ENCODE measurements at regions of chr7 and their contacts with region 1.

Region 1: GRCh38 chr7:135662373-135663114 is at the start of gene STMP1:
- DNase-seq: peak; percentile 82
- H3K4me3 ChIP-seq: peak within 1 kb of the TSS; percentile 95
- CTCF ChIP-seq: peak; percentile 89

Region 2: GRCh38 chr7:135281363-135281949 is 381.1 kb before region 1 on chr7:
- CTCF ChIA-PET with region 1: interaction called, 24 read pairs
- POLR2A ChIA-PET with region 1: no interaction called
- DNase-seq: peak; percentile 45
- H3K4me3 ChIP-seq: no peak overlapping the region
- CTCF ChIP-seq: peak; percentile 94

Region 3: DNA sequence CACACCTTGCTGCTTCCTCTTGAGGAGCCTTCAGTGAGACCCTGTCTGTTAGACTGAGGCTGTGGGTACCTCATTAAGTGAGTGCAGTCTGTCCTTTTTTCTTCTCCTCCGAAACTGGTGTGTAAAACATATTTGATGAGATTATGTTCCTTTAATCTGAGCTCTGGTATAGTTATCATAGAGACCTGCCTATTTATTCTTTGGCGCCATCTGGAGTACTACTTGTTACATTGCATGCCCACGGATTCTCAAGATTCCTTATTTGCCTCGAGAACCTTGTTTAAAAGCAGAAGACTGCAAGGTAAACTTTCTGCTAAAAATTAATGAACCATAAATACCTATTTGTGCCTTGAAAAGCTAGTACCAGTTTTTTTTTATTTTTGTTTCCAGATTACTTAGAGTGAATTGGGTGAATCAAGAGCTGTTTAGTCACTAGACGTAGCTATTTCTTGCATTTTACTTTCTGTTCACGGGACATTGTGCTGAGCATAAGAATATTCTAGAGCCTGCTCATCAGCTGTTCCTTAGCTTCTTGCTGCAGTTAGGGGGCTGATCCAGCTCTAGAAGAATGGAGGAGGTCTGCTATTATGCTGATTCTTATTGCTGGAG is 17.1 kb before region 1 on chr7:
- CTCF ChIA-PET with region 1: interaction called, 139 read pairs
- POLR2A ChIA-PET with region 1: no interaction called
- DNase-seq: no peak
- H3K4me3 ChIP-seq: no peak overlapping the region
- CTCF ChIP-seq: peak; percentile 52

Region 4: GRCh38 chr7:135684136-135684535 is 21.6 kb after region 1 on chr7:
- CTCF ChIA-PET with region 1: interaction called, 13 read pairs
- POLR2A ChIA-PET with region 1: interaction called, 3 read pairs
- DNase-seq: no peak
- H3K4me3 ChIP-seq: no peak overlapping the region
- CTCF ChIP-seq: no peak

Region 5: GRCh38 chr7:135795846-135796570 is 133.5 kb after region 1 on chr7:
- CTCF ChIA-PET with region 1: interaction called, 199 read pairs
- POLR2A ChIA-PET with region 1: no interaction called
- DNase-seq: no peak
- H3K4me3 ChIP-seq: no peak overlapping the region
- CTCF ChIP-seq: no peak

Region 6: GRCh38 chr7:135911099-135911498 is 248.6 kb after region 1 on chr7:
- CTCF ChIA-PET with region 1: no interaction called
- POLR2A ChIA-PET with region 1: no interaction called
- DNase-seq: no peak
- H3K4me3 ChIP-seq: no peak overlapping the region
- CTCF ChIP-seq: no peak

Measured in AG04449 (cell line).